ENCODE measurements at regions of chr3 and their contacts with region 1.

Region 1: DNA sequence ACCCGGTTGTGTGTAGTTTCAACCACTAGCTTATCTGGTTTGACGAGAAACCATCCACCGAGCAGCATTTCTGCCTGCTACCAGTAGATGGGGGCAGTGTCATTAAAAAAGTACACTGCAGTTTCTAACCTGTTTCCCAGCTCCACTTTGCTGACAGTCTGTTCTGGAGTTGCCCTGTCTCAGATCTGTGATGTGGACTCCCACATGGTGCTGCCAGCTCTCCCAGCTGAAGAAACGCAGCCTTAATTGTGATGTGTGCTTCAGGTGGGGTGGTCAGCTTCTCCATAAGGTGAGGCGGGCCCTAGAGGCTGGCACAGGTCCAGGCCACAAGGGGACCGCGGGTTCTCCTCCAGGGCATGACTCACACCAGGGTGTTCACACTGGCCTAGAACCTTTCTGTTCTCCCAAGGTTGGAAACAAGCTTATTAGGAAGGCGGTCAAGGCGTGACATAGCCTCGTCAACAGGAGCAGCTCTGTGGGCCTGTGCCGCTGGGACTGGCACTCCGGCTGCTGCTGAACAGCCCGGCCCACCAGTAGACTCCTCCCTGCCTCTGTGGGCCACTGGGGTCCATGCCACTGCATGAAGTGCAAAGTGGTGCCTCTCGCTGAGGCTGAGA is 2.9 kb upstream of the FAM43A start:
- DNase-seq: peak; percentile 60 to 72
- ATAC-seq: peak; percentile 69 to 77 (median 76)
- H3K4me3 ChIP-seq: no peak overlapping the region
- H3K27ac ChIP-seq: peak overlapping the region; percentile 61
- H3K4me1 ChIP-seq: peaks cover 13% of the 10 kb centered on the region
- H3K27me3 ChIP-seq: no peaks in the 10 kb centered on the region
- CTCF ChIP-seq: peak; percentile 87

Region 2: GRCh38 chr3:194852825-194853537 is 170.2 kb after region 1 on chr3:
- intact Hi-C with region 1: loop called in 1 of 2 experiments (anchors 10 kb)
- DNase-seq: peak in 1 of 2 donors; percentile 85
- ATAC-seq: peak; percentile 62 to 82 (median 73)
- H3K4me3 ChIP-seq: peak overlapping the region; percentile 25
- H3K27ac ChIP-seq: peak overlapping the region; percentile 53
- H3K4me1 ChIP-seq: peaks cover 22% of the 10 kb centered on the region
- H3K27me3 ChIP-seq: no peaks in the 10 kb centered on the region
- CTCF ChIP-seq: no peak

Region 3: DNA sequence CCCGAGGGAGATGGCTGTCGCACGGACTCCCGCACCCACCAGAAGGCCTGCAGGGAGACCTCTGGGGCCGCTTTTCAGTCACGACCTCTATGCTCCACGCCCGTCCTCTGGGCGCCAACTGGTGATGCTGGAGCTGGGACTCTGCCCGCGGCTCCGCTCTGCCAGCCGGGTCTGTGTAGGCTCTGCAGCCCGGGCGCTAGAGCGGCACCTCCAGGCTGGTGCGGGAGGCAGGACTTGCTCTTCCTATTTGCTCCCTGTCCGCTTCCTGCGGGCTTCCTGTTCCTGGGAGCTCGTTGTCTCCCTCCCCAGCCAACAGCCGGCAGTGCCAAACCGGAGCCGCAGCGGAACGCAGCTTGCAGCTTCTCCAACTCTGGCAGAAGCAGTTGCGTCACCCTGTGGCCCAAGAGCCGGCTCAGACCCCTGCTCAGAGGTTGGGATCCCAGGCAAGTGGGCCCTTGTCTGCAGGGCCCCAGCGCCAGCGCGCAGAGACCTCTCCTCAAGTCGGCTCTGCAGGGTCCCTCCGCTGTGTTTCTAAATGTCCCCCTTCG is 302.3 kb after region 1 on chr3:
- intact Hi-C with region 1: loop called in 1 of 2 experiments (anchors 5 kb)
- DNase-seq: peak; percentile 76 to 91
- ATAC-seq: peak; percentile 74 to 96 (median 92)
- H3K4me3 ChIP-seq: peak overlapping the region; percentile 54
- H3K27ac ChIP-seq: peak overlapping the region; percentile 25
- H3K4me1 ChIP-seq: peaks cover 9% of the 10 kb centered on the region
- H3K27me3 ChIP-seq: peaks cover 0 to 2% (median 0%) of the 10 kb centered on the region in 3 donors
- CTCF ChIP-seq: peak; percentile 24

Region 4: GRCh38 chr3:195094171-195094921 is 411.5 kb after region 1 on chr3:
- intact Hi-C with region 1: no loop called
- DNase-seq: peak; percentile 8 to 48
- ATAC-seq: peak; percentile 33 to 70 (median 50)
- H3K4me3 ChIP-seq: no peak overlapping the region
- H3K27ac ChIP-seq: no peak overlapping the region
- H3K4me1 ChIP-seq: peaks cover 8% of the 10 kb centered on the region
- H3K27me3 ChIP-seq: no peaks in the 10 kb centered on the region
- CTCF ChIP-seq: no peak

Region 5: GRCh38 chr3:195106418-195106906 is 423.7 kb after region 1 on chr3:
- intact Hi-C with region 1: loop called (anchors 1 kb)
- DNase-seq: peak; percentile 77 to 84
- ATAC-seq: peak; percentile 86 to 93 (median 89)
- H3K4me3 ChIP-seq: peak overlapping the region; percentile 50
- H3K27ac ChIP-seq: no peak overlapping the region
- H3K4me1 ChIP-seq: peaks cover 11% of the 10 kb centered on the region
- H3K27me3 ChIP-seq: no peaks in the 10 kb centered on the region
- CTCF ChIP-seq: peak; percentile 100

Region 6: GRCh38 chr3:195259475-195260279 is 576.9 kb after region 1 on chr3:
- intact Hi-C with region 1: loop called (anchors 2 to 5 kb)
- DNase-seq: peak; percentile 92 to 95
- ATAC-seq: peak; percentile 88 to 91 (median 90)
- H3K4me3 ChIP-seq: peak overlapping the region; percentile 84
- H3K27ac ChIP-seq: peak overlapping the region; percentile 87
- H3K4me1 ChIP-seq: peaks cover 19% of the 10 kb centered on the region
- H3K27me3 ChIP-seq: no peaks in the 10 kb centered on the region
- CTCF ChIP-seq: peak; percentile 99

Measured in psoas muscle (tissue), 8 donors.